Psoas muscle (tissue), 8 donors: ENCODE measurements at regions of chr4 and their contacts with region 1.

Region 1: GRCh38 chr4:145732895-145733880 is 53.2 kb downstream of the C4orf51 start:
- DNase-seq: peak; percentile 97
- ATAC-seq: peak; percentile 66 to 78 (median 69)
- H3K4me3 ChIP-seq: peak overlapping the region; percentile 68
- H3K27ac ChIP-seq: peak overlapping the region; percentile 98
- H3K4me1 ChIP-seq: peaks cover 40% of the 10 kb centered on the region
- H3K27me3 ChIP-seq: no peaks in the 10 kb centered on the region
- CTCF ChIP-seq: peak; percentile 11

Region 2: GRCh38 chr4:145180298-145181090 is 552.7 kb before region 1 on chr4 and contains the start of gene OTUD4:
- intact Hi-C with region 1: loop called in 1 of 2 experiments (anchors 5 kb)
- DNase-seq: peak; percentile 97 to 98
- ATAC-seq: peak; percentile 81 to 90 (median 84)
- H3K4me3 ChIP-seq: peak within 1 kb of the TSS; percentile 83
- H3K27ac ChIP-seq: peak within 1 kb of the TSS; percentile 97
- H3K4me1 ChIP-seq: peaks cover 40% of the 10 kb centered on the region
- H3K27me3 ChIP-seq: no peaks in the 10 kb centered on the region
- CTCF ChIP-seq: peak; percentile 8
- total RNA-seq, gene OTUD4: 51.6 to 88.0 (median 56.5) TPM

Region 3: GRCh38 chr4:145679520-145679919 is 53.7 kb before region 1 on chr4:
- intact Hi-C with region 1: loop called (anchors 1 to 2 kb)
- DNase-seq: peak; percentile 45 to 79
- ATAC-seq: peak; percentile 95 to 98 (median 96)
- H3K4me3 ChIP-seq: peak overlapping the region; percentile 46
- H3K27ac ChIP-seq: peak overlapping the region; percentile 93
- H3K4me1 ChIP-seq: peaks cover 16% of the 10 kb centered on the region
- H3K27me3 ChIP-seq: no peaks in the 10 kb centered on the region
- CTCF ChIP-seq: no peak

Region 4: DNA sequence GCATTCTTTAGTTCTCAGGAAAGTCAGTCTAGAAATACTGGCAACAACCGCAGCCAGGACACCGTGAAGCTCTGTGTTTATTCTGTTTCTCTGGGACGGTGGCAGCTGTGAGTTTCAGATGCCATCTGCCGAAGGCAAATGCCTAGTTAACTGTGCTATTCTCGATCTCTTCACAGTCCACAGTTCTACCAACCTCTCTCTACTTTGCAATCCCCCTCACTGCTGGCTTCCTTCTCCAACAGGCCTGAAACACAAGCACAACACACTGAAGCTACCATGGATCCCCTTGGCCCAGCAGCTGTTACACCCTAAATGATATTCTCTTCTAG is 86.6 kb after region 1 on chr4:
- intact Hi-C with region 1: loop called in 1 of 2 experiments (anchors 5 kb)
- DNase-seq: no peak
- ATAC-seq: peak; percentile 76 to 89 (median 83)
- H3K4me3 ChIP-seq: peak overlapping the region; percentile 47
- H3K27ac ChIP-seq: peak overlapping the region; percentile 90
- H3K4me1 ChIP-seq: peaks cover 29% of the 10 kb centered on the region
- H3K27me3 ChIP-seq: no peaks in the 10 kb centered on the region
- CTCF ChIP-seq: no peak